ENCODE measurements at regions of chr22 and their contacts with region 1.

Region 1: DNA sequence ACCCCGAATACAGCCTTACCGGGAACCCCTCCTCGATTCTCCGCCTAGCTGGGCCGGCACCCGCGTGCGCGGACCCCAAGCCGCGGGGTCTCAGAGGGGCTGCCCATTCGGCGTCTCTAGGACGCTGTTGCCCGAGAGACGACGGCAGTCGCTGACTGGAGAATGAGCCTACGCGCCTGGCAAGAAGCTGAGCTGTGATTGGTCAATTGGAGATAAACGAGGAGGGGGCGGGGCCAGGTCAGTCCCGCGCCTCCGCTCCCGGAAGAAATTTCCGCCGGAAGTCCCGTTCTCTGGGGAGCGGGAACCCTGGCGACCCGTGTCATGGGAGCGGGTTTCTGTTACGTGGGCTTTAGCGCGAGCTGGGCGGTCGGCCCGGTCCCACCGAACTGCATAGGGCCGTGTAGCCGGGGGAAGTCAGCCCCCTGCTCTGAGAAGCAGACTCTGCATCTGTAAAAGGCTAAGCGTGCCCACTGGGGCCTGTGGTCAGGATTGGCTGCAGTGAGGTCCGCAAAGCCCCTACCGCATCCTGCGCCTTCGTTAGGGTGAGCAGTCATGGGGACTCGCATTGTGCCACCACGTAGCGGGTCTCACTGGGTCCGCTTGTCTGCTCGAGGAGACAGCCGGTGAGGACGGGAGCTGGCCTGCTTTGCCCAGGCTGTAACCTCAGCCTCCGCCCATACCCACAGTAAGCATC is at the start of gene EFCAB6:
- DNase-seq: peak; percentile 87
- H3K4me3 ChIP-seq: peak within 1 kb of the TSS; percentile 63 to 89 (median 73)
- H3K27ac ChIP-seq: peak within 1 kb of the TSS; percentile 71
- H3K4me1 ChIP-seq: peaks cover 17% of the 10 kb centered on the region
- H3K27me3 ChIP-seq: no peaks in the 10 kb centered on the region
- CTCF ChIP-seq: no peak
- total RNA-seq, gene EFCAB6: 0.59 to 2.0 TPM

Region 2: GRCh38 chr22:43404673-43405385 is 407.5 kb before region 1 on chr22:
- CTCF ChIA-PET with region 1: no interaction called
- dilution Hi-C with region 1: no loop called
- in situ Hi-C with region 1: no loop called
- intact Hi-C with region 1: loop called (anchors 5 kb)
- DNase-seq: peak; percentile 88
- H3K4me3 ChIP-seq: no peak overlapping the region
- H3K27ac ChIP-seq: no peak overlapping the region
- H3K4me1 ChIP-seq: peaks cover 11% of the 10 kb centered on the region
- H3K27me3 ChIP-seq: peaks cover 14% of the 10 kb centered on the region
- CTCF ChIP-seq: no peak

Region 3: GRCh38 chr22:43772831-43773230 is 39.5 kb before region 1 on chr22:
- CTCF ChIA-PET with region 1: no interaction called
- dilution Hi-C with region 1: no loop called
- in situ Hi-C with region 1: no loop called
- intact Hi-C with region 1: no loop called
- DNase-seq: no peak
- H3K4me3 ChIP-seq: no peak overlapping the region
- H3K27ac ChIP-seq: no peak overlapping the region
- H3K4me1 ChIP-seq: peaks cover 11% of the 10 kb centered on the region
- H3K27me3 ChIP-seq: no peaks in the 10 kb centered on the region
- CTCF ChIP-seq: no peak

Region 4: DNA sequence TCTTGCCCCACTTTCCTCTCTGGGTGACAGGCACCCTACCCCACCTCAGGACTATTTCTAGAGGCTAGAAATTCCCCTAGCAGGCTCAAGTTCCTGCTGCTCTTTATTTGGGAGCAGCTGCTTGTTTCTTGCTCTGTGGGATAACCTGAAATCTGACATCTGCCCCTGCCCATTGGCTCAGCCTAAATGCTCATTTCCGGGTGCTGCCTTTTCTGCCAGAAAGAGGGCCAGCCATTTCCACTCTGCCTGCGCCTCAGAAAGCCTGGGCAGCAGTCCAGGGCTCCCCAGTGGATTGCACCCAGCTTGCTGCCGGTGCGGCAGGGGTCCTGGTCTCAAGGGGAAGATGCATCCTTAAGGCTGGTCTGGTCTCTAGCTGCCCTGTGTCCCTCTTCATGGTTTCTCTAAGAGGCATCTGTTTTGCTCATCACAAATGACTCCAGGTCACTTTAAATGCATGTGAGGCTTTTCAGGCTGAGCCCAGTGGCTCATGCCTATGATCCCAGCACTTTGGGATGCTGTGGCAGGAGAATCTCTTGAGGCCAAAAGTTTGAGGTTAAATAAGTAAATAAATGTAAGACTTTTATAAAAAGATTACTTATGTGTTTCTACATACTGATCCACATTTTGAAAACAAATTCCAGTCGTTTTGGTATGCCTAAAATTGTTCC is 89.8 kb after region 1 on chr22:
- CTCF ChIA-PET with region 1: no interaction called
- dilution Hi-C with region 1: no loop called
- in situ Hi-C with region 1: no loop called
- intact Hi-C with region 1: no loop called
- DNase-seq: no peak
- H3K4me3 ChIP-seq: no peak overlapping the region
- H3K27ac ChIP-seq: no peak overlapping the region
- H3K4me1 ChIP-seq: peaks cover 22% of the 10 kb centered on the region
- H3K27me3 ChIP-seq: no peaks in the 10 kb centered on the region
- CTCF ChIP-seq: no peak

Measured in mammary epithelial cell (primary cell).